Activated naive CD8-positive, alpha-beta T cell treated with anti-CD3 and anti-CD28 coated beads, Interleukin-2, amount 10 ng/mL, durations not matched to agents 7 days and 5 days (primary cell): ENCODE measurements at regions of chr18 and their contacts with region 1.

Region 1: DNA sequence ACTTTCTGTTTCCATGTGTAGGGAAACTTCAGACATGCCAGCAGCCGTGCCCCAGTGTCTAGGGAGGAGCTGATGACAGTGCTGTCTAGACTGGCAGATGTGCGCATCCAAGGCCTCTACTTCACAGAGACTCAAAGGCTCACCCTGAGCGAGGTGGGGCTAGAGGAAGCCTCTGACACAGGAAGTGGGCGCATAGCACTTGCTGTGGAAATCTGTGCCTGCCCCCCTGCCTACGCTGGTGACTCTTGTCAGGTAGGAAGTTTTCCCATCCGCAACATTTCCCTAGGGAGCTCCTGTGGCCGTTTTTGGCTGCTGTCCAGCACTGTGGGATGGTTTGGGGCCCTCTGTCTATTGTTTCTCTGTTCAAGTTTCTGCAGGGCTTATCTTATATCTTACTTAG is 143.1 kb upstream of the TTC39C start:
- DNase-seq: peak; percentile 66
- ATAC-seq: peak; percentile 100
- H3K4me3 Mint-ChIP-seq: peak overlapping the region; percentile 77
- H3K27ac Mint-ChIP-seq: peak overlapping the region; percentile 87
- H3K4me1 Mint-ChIP-seq: peaks cover 35% of the 10 kb centered on the region
- H3K27me3 Mint-ChIP-seq: peaks cover 8% of the 10 kb centered on the region

Region 2: DNA sequence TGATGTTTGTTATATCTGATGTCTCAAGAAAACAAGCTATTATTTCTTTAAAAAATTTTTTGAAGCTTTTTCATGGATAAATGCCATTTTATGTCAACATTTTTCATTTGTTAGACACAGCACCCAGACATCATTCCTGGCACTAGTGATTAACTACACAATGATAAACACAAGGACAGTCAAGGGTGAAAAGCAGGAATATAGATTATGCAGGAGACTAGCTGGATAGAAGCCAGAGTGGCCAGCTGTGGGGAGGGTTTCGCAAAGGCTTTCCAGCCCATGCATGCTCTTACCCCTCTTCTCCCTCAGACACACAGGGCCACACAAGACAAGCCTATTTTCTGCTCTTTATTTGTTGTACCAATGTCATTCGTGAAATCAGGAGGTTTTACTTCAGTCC is 16.1 kb after region 1 on chr18:
- POLR2A ChIA-PET with region 1: no interaction called
- DNase-seq: no peak
- ATAC-seq: no peak
- H3K4me3 Mint-ChIP-seq: no peak overlapping the region
- H3K27ac Mint-ChIP-seq: no peak overlapping the region
- H3K4me1 Mint-ChIP-seq: peaks cover 26% of the 10 kb centered on the region
- H3K27me3 Mint-ChIP-seq: no peaks in the 10 kb centered on the region

Region 3: GRCh38 chr18:24089076-24089475 is 217.7 kb after region 1 on chr18:
- POLR2A ChIA-PET with region 1: interaction called, 10 read pairs
- DNase-seq: no peak
- ATAC-seq: no peak
- H3K4me3 Mint-ChIP-seq: no peak overlapping the region
- H3K27ac Mint-ChIP-seq: no peak overlapping the region
- H3K4me1 Mint-ChIP-seq: peaks cover 4% of the 10 kb centered on the region
- H3K27me3 Mint-ChIP-seq: no peaks in the 10 kb centered on the region